ENCODE measurements at regions of chr1 and their contacts with region 1.

Region 1: DNA sequence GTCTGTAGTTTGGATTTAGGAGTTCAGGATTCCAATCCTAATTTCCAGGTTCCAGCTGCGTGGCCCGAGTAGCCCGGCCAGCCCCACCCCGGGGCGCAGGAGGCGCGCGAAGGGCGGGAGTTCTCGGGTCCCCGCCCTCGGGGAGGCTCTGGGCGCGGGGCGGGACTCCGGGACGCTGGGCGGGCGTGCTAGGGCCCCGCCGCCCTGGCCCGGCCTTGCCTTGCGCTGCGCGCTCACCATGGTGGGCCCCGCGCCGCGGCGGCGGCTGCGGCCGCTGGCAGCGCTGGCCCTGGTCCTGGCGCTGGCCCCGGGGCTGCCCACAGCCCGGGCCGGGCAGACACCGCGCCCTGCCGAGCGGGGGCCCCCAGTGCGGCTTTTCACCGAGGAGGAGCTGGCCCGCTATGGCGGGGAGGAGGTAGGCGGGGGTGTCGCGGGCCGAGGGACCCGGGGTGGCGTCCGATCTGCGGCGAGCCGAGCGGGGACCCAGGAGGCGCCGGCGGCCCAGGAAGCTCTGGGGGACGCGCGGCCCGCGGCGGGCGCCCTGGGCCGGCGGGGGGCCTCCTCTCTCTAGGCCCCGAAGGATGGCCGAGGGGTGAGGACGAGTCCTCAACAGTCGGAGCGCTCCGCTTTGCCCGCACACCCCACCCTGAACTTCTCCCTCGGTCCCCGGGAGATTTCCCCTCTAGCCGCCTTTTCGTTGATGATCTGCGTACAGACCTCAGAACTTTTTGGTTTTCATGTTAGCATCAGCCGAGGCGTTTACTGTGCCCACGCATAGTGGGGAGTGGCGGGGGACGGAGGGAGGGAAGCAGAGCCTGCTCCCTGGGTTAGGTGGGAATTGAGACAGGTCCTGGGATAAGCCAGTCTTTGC is at the start of gene NENF:
- DNase-seq: no peak
- ATAC-seq: peak; percentile 100
- H3K4me3 ChIP-seq: peak within 1 kb of the TSS; percentile 86
- H3K27ac ChIP-seq: peak within 1 kb of the TSS; percentile 64
- H3K4me1 ChIP-seq: peaks cover 11% of the 10 kb centered on the region
- H3K27me3 ChIP-seq: no peaks in the 10 kb centered on the region
- CTCF ChIP-seq: no peak
- EP300 ChIP-seq: no peak
- POLR2A ChIP-seq: peak; percentile 70; the same call in 1 of the 2 replicates
- RAD21 ChIP-seq: no peak
- polyA plus RNA-seq, gene NENF: 5.1 to 19.3 TPM

Region 2: GRCh38 chr1:212138441-212138840 is 294.5 kb before region 1 on chr1:
- CTCF ChIA-PET with region 1: no interaction called
- POLR2A ChIA-PET with region 1: no interaction called
- RAD21 ChIA-PET with region 1: no interaction called
- SMC1A ChIA-PET with region 1: no interaction called
- in situ Hi-C with region 1: no loop called
- intact Hi-C with region 1: no loop called
- DNase-seq: no peak
- ATAC-seq: no peak
- H3K4me3 ChIP-seq: no peak overlapping the region
- H3K27ac ChIP-seq: no peak overlapping the region
- H3K4me1 ChIP-seq: no peaks in the 10 kb centered on the region
- H3K27me3 ChIP-seq: no peaks in the 10 kb centered on the region
- CTCF ChIP-seq: no peak
- EP300 ChIP-seq: no peak
- POLR2A ChIP-seq: no peak
- RAD21 ChIP-seq: no peak

Region 3: GRCh38 chr1:212162635-212163034 is 270.3 kb before region 1 on chr1:
- CTCF ChIA-PET with region 1: no interaction called
- POLR2A ChIA-PET with region 1: no interaction called
- RAD21 ChIA-PET with region 1: no interaction called
- SMC1A ChIA-PET with region 1: no interaction called
- in situ Hi-C with region 1: no loop called
- intact Hi-C with region 1: no loop called
- DNase-seq: peak; percentile 79
- ATAC-seq: peak; percentile 59
- H3K4me3 ChIP-seq: no peak overlapping the region
- H3K27ac ChIP-seq: peak overlapping the region; percentile 45
- H3K4me1 ChIP-seq: peaks cover 47% of the 10 kb centered on the region
- H3K27me3 ChIP-seq: no peaks in the 10 kb centered on the region
- CTCF ChIP-seq: no peak
- EP300 ChIP-seq: peak in 1 of 2 experiments; percentile 70; a peak in 2 of 4 replicates
- POLR2A ChIP-seq: no peak
- RAD21 ChIP-seq: no peak

Region 4: GRCh38 chr1:212414328-212415106 is 18.4 kb before region 1 on chr1 and contains the start of gene PACC1:
- CTCF ChIA-PET with region 1: interaction called, 3 read pairs
- POLR2A ChIA-PET with region 1: interaction called, 10 read pairs
- RAD21 ChIA-PET with region 1: interaction called, 6 read pairs
- SMC1A ChIA-PET with region 1: interaction called, 8 read pairs
- in situ Hi-C with region 1: no loop called
- intact Hi-C with region 1: loop called (anchors 1 kb)
- DNase-seq: peak; percentile 94
- ATAC-seq: peak; percentile 96
- H3K4me3 ChIP-seq: peak within 1 kb of the TSS; percentile 81
- H3K27ac ChIP-seq: peak within 1 kb of the TSS; percentile 90
- H3K4me1 ChIP-seq: peaks cover 20% of the 10 kb centered on the region
- H3K27me3 ChIP-seq: no peaks in the 10 kb centered on the region
- CTCF ChIP-seq: no peak
- EP300 ChIP-seq: peak in 1 of 2 experiments; percentile 88; a peak in 3 of 4 replicates
- POLR2A ChIP-seq: peak; percentile 96
- RAD21 ChIP-seq: no peak
- polyA plus RNA-seq, gene PACC1: 16.1 to 17.2 TPM

Measured in GM12878 (cell line).